ENCODE measurements at regions of chr1 and their contacts with region 1.

Region 1: DNA sequence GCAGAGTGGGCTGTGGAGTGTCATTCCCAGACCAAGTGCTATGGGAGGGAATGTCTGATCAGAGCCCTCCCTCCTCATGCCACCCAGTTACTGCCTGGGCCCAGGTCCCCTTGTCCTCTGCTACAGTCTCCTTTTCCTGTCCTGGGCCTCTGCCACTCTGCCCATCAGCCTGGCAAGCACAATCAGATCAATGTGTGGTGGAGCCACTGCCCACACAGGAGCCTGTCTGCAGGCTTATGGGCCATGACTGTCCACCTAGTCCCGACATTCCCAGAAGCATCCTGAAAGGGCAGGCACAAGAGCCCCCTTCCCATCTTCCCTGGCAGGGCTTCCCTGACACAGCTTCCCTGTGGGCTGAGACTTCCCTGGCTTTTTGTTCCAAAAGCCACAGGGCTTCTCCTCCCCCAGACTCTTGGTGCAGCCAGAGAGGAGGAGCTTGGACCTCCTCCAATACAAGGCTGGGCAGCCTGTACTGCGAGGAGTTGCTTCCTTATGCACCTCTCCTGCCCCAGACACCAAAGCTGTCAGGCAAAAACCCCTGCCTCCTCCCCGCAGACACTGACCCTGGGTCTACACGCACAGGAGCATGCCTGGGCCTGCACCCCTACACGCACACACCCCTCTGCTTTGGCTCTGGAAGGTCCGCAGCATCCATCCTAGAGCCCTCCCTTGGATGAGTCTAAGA is 29.2 kb upstream of the CNTN2 start:
- DNase-seq: peak; percentile 54
- H3K4me3 ChIP-seq: no peak overlapping the region
- H3K27ac ChIP-seq: no peak overlapping the region
- H3K4me1 ChIP-seq: peaks cover 5% of the 10 kb centered on the region
- H3K27me3 ChIP-seq: no peaks in the 10 kb centered on the region
- CTCF ChIP-seq: no peak

Region 2: DNA sequence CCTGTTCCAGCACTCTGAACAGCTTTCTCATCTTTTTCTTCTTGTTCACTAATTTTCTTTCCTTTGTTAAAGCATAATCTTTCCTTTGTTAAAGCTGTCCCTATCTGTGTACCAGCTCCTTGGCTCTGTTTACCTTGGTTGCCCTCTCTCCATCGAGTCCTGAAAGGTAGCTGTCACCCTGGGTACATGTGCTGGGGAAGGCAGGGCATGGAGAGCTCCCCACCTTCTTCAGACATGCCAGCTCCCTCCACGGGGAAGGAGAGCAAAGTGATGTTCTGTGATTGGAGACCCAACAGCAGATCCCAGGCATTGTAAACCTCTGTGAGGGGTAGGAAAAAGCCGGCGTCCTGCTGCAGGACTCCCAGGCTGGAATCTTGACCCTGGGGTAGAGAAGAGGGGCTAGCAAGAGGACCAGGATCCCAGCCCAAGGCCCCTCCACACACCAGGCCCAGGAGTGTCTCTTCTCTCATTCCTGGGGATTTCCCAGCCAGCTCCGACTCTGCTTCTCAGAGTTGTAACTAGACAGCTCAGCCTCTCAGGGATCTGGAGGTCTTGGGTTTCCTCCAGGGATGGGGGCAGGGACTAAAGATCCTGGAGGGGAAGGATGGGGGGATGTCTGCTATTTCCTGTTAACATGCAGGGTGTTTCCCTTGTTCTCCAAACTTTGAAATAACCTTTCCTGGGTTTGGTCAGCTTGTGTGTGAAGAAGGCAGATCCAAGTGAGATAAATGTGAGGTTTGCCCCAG is 248.3 kb after region 1 on chr1:
- CTCF ChIA-PET with region 1: interaction called, 12 read pairs
- POLR2A ChIA-PET with region 1: no interaction called
- intact Hi-C with region 1: no loop called
- DNase-seq: peak; percentile 27
- H3K4me3 ChIP-seq: no peak overlapping the region
- H3K27ac ChIP-seq: no peak overlapping the region
- H3K4me1 ChIP-seq: peaks cover 15% of the 10 kb centered on the region
- H3K27me3 ChIP-seq: no peaks in the 10 kb centered on the region
- CTCF ChIP-seq: no peak